ENCODE measurements at regions of chr9 and their contacts with region 1.

Region 1: DNA sequence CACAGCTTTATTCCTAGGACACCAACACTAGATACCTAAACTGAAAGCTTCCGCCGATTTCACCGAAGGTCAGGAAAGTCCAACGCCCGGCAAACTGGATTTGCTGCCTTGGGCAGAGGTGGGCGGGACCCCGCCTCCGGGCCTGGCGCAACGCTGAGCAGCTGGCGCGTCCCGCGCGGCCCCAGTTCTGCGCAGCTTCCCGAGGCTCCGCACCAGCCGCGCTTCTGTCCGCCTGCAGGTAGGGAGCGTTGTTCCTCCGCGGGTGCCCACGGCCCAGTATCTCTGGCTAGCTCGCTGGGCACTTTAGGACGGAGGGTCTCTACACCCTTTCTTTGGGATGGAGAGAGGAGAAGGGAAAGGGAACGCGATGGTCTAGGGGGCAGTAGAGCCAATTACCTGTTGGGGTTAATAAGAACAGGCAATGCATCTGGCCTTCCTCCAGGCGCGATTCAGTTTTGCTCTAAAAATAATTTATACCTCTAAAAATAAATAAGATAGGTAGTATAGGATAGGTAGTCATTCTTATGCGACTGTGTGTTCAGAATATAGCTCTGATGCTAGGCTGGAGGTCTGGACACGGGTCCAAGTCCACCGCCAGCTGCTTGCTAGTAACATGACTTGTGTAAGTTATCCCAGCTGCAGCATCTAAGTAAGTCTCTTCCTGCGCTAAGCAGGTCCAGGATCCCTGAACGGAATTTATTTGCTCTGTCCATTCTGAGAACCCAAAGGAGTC is at the start of gene CD274:
- DNase-seq: peak; percentile 53 to 92 (median 74)
- ATAC-seq: peak; percentile 93
- H3K4me3 ChIP-seq: peak within 1 kb of the TSS; percentile 60 to 91
- H3K4me3 Mint-ChIP-seq: peak within 1 kb of the TSS; percentile 88
- H3K27ac ChIP-seq: peak within 1 kb of the TSS; percentile 94 to 96
- H3K27ac Mint-ChIP-seq: peak within 1 kb of the TSS; percentile 95
- H3K4me1 ChIP-seq: peaks cover 17% of the 10 kb centered on the region
- H3K4me1 Mint-ChIP-seq: peaks cover 51% of the 10 kb centered on the region
- H3K27me3 ChIP-seq: no peaks in the 10 kb centered on the region
- H3K27me3 Mint-ChIP-seq: no peaks in the 10 kb centered on the region
- CTCF ChIP-seq: peak; percentile 55
- total RNA-seq, gene CD274: 3.4 to 3.7 TPM

Region 2: DNA sequence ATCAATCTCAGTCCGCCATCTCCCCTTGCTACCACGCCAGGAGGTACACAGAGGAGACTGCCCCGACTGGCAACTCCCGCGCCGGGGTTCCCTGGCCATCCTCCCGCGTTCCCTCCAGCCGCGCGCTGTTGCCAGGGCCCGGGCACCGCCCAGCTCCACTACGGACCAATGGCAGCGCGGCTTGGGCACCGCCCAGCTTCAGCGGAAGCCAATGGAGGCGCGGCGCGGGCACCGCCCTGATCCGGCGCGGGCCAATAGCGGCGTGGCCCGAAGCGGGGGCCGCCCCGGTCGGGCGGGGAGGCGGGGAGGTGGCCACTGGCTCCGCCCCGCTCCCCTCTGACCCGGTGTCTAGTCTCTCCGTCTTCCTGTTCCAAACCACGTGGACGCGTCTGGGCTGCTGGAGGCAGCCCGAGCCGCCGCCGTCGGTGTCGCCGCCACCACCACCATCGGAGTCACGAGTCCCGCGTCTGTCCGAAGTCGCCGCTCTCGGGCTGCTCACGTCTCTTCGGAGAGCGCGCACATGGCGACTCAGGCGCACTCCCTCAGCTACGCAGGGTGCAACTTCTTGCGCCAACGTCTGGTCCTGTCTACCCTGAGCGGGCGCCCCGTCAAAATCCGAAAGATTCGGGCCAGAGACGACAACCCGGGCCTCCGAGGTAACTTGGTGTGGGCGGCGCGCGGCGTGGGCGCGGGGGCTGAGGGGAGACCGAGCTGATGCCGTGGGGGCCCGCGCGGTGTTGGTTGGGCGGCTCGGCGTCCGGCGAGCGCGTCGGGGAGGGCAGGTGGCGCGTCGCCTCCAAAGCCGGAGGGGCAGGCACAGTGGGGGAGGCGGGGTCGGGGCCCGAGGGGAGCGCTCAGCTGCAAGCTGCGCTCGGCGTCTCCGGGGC is 657.7 kb before region 1 on chr9 and contains the start of gene RCL1:
- CTCF ChIA-PET with region 1: no interaction called
- POLR2A ChIA-PET with region 1: interaction called, 5 read pairs
- intact Hi-C with region 1: loop called in 1 of 2 experiments (anchors 5 kb)
- DNase-seq: peak; percentile 92 to 98 (median 95)
- ATAC-seq: peak; percentile 90
- H3K4me3 ChIP-seq: peak within 1 kb of the TSS; percentile 92 to 98
- H3K4me3 Mint-ChIP-seq: peak within 1 kb of the TSS; percentile 95
- H3K27ac ChIP-seq: peak within 1 kb of the TSS; percentile 90 to 92
- H3K27ac Mint-ChIP-seq: peak within 1 kb of the TSS; percentile 96
- H3K4me1 ChIP-seq: peaks cover 30% of the 10 kb centered on the region
- H3K4me1 Mint-ChIP-seq: peaks cover 47% of the 10 kb centered on the region
- H3K27me3 ChIP-seq: no peaks in the 10 kb centered on the region
- H3K27me3 Mint-ChIP-seq: no peaks in the 10 kb centered on the region
- CTCF ChIP-seq: no peak
- total RNA-seq, gene RCL1: 30.8 to 35.0 TPM

Region 3: GRCh38 chr9:5186416-5187169 is 263.9 kb before region 1 on chr9:
- CTCF ChIA-PET with region 1: interaction called, 30 read pairs
- POLR2A ChIA-PET with region 1: interaction called, 3 read pairs
- intact Hi-C with region 1: no loop called
- DNase-seq: peak; percentile 31 to 84 (median 61)
- ATAC-seq: peak; percentile 94
- H3K4me3 ChIP-seq: no peak overlapping the region
- H3K4me3 Mint-ChIP-seq: no peak overlapping the region
- H3K27ac ChIP-seq: no peak overlapping the region
- H3K27ac Mint-ChIP-seq: no peak overlapping the region
- H3K4me1 ChIP-seq: no peaks in the 10 kb centered on the region
- H3K4me1 Mint-ChIP-seq: peaks cover 6% of the 10 kb centered on the region
- H3K27me3 ChIP-seq: no peaks in the 10 kb centered on the region
- H3K27me3 Mint-ChIP-seq: no peaks in the 10 kb centered on the region
- CTCF ChIP-seq: peak; percentile 76

Region 4: GRCh38 chr9:5402217-5402616 is 48.3 kb before region 1 on chr9:
- CTCF ChIA-PET with region 1: no interaction called
- POLR2A ChIA-PET with region 1: no interaction called
- intact Hi-C with region 1: no loop called
- DNase-seq: peak in 1 of 9 experiments; percentile 8
- ATAC-seq: no peak
- H3K4me3 ChIP-seq: no peak overlapping the region
- H3K4me3 Mint-ChIP-seq: no peak overlapping the region
- H3K27ac ChIP-seq: no peak overlapping the region
- H3K27ac Mint-ChIP-seq: peak overlapping the region; percentile 61
- H3K4me1 ChIP-seq: peaks cover 5% of the 10 kb centered on the region
- H3K4me1 Mint-ChIP-seq: peaks cover 28% of the 10 kb centered on the region
- H3K27me3 ChIP-seq: no peaks in the 10 kb centered on the region
- H3K27me3 Mint-ChIP-seq: no peaks in the 10 kb centered on the region
- CTCF ChIP-seq: no peak

Region 5: GRCh38 chr9:5557606-5558587 is 107.4 kb after region 1 on chr9:
- CTCF ChIA-PET with region 1: interaction called, 13 read pairs
- POLR2A ChIA-PET with region 1: interaction called, 3 read pairs
- intact Hi-C with region 1: no loop called
- DNase-seq: peak; percentile 12 to 86 (median 54)
- ATAC-seq: peak; percentile 96
- H3K4me3 ChIP-seq: no peak overlapping the region
- H3K4me3 Mint-ChIP-seq: peak overlapping the region; percentile 27
- H3K27ac ChIP-seq: peak overlapping the region in 1 of 2 experiments; percentile 71
- H3K27ac Mint-ChIP-seq: peak overlapping the region; percentile 92
- H3K4me1 ChIP-seq: peaks cover 36% of the 10 kb centered on the region
- H3K4me1 Mint-ChIP-seq: peaks cover 48% of the 10 kb centered on the region
- H3K27me3 ChIP-seq: no peaks in the 10 kb centered on the region
- H3K27me3 Mint-ChIP-seq: no peaks in the 10 kb centered on the region
- CTCF ChIP-seq: no peak

Region 6: GRCh38 chr9:5582835-5583195 is 132.3 kb after region 1 on chr9:
- CTCF ChIA-PET with region 1: interaction called, 86 read pairs
- POLR2A ChIA-PET with region 1: interaction called, 21 read pairs
- intact Hi-C with region 1: no loop called
- DNase-seq: peak in 6 of 9 experiments; percentile 4 to 62 (median 40)
- ATAC-seq: peak; percentile 85
- H3K4me3 ChIP-seq: no peak overlapping the region
- H3K4me3 Mint-ChIP-seq: no peak overlapping the region
- H3K27ac ChIP-seq: no peak overlapping the region
- H3K27ac Mint-ChIP-seq: peak overlapping the region; percentile 46
- H3K4me1 ChIP-seq: peaks cover 31% of the 10 kb centered on the region
- H3K4me1 Mint-ChIP-seq: peaks cover 45% of the 10 kb centered on the region
- H3K27me3 ChIP-seq: no peaks in the 10 kb centered on the region
- H3K27me3 Mint-ChIP-seq: no peaks in the 10 kb centered on the region
- CTCF ChIP-seq: no peak

Region 7: GRCh38 chr9:5593904-5594303 is 143.4 kb after region 1 on chr9:
- CTCF ChIA-PET with region 1: interaction called, 86 read pairs
- POLR2A ChIA-PET with region 1: interaction called, 4 read pairs
- intact Hi-C with region 1: loop called (anchors 1 to 2 kb)
- DNase-seq: peak in 1 of 9 experiments; percentile 17
- ATAC-seq: no peak
- H3K4me3 ChIP-seq: no peak overlapping the region
- H3K4me3 Mint-ChIP-seq: no peak overlapping the region
- H3K27ac ChIP-seq: no peak overlapping the region
- H3K27ac Mint-ChIP-seq: no peak overlapping the region
- H3K4me1 ChIP-seq: no peaks in the 10 kb centered on the region
- H3K4me1 Mint-ChIP-seq: peaks cover 6% of the 10 kb centered on the region
- H3K27me3 ChIP-seq: no peaks in the 10 kb centered on the region
- H3K27me3 Mint-ChIP-seq: no peaks in the 10 kb centered on the region
- CTCF ChIP-seq: no peak

Region 8: GRCh38 chr9:5714501-5715401 is 264.2 kb after region 1 on chr9:
- CTCF ChIA-PET with region 1: no interaction called
- POLR2A ChIA-PET with region 1: no interaction called
- intact Hi-C with region 1: loop called in 1 of 2 experiments (anchors 1 kb)
- DNase-seq: peak in 2 of 9 experiments; percentile 7 to 10
- ATAC-seq: no peak
- H3K4me3 ChIP-seq: no peak overlapping the region
- H3K4me3 Mint-ChIP-seq: no peak overlapping the region
- H3K27ac ChIP-seq: no peak overlapping the region
- H3K27ac Mint-ChIP-seq: no peak overlapping the region
- H3K4me1 ChIP-seq: no peaks in the 10 kb centered on the region
- H3K4me1 Mint-ChIP-seq: peaks cover 6% of the 10 kb centered on the region
- H3K27me3 ChIP-seq: no peaks in the 10 kb centered on the region
- H3K27me3 Mint-ChIP-seq: no peaks in the 10 kb centered on the region
- CTCF ChIP-seq: peak; percentile 30

Measured in CD8-positive, alpha-beta T cell (primary cell).